ENCODE measurements at regions of chr17 and their contacts with region 1.

Region 1: DNA sequence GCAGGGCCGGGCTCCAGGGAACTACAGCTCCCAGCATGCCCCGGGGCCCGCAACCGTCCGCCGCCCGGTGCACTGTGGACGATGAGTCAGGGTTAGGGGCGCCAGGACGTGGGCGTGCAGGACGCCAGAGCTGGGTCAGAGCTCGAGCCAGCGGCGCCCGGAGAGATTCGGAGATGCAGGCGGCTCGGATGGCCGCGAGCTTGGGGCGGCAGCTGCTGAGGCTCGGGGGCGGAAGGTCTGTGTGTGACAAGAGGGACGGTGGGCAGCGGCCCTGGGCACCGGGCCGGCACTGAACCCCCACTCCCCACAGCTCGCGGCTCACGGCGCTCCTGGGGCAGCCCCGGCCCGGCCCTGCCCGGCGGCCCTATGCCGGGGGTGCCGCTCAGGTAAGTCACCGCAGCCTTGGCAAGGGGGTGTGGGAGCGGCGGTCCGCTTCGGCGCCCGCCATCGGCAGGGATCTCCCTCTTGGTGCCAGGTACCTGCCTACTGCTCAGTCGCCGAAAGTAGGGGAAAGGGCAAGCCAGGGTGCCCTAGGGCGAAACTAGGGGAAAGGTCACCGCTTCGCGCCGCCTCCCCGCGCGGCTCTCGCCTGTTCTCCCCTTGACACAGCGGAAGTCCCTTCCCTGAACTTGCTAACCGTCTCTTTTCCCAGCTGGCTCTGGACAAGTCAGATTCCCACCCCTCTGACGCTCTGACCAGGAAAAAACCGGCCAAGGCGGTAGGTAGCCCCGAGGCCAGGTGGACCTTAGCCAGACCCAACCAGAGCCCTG is at the starts of genes ACADVL and DLG4:
- DNase-seq: peak; percentile 78
- ATAC-seq: peak; percentile 76
- H3K4me3 ChIP-seq: peak within 1 kb of the TSS; percentile 31 to 86 (median 80)
- H3K4me3 Mint-ChIP-seq: peak within 1 kb of the TSS; percentile 97
- H3K27ac ChIP-seq: peak within 1 kb of the TSS; percentile 42 to 78
- H3K27ac Mint-ChIP-seq: peak within 1 kb of the TSS; percentile 93
- H3K4me1 ChIP-seq: peaks cover 20 to 47% of the 10 kb centered on the region in 2 donors
- H3K4me1 Mint-ChIP-seq: peaks cover 48% of the 10 kb centered on the region
- H3K27me3 ChIP-seq: no peaks in the 10 kb centered on the region
- H3K27me3 Mint-ChIP-seq: no peaks in the 10 kb centered on the region
- CTCF ChIP-seq: no peak
- total RNA-seq, gene ACADVL: 640 and 655 TPM in 2 replicates
- total RNA-seq, gene DLG4: 12.0 and 12.5 TPM in 2 replicates

Region 2: DNA sequence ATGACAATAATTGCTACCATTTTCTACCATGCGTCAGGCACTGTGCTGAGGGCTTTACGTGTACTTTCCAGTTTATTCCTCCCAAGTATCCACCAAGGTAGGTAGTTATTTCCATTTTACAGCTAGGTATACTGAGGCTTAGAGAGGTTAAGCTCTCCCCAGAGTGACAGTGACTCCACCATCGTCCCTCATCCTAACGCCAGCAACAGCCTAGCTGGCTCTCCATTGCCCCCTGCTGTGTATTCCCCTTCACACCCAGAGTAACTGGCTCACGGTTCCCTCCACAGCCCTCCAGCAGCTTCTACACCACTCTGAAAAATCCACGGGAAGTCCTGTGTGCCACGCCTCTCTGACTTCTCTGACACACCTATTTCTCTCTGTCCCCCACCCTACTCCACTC is 33.8 kb before region 1 on chr17:
- CTCF ChIA-PET with region 1: no interaction called
- POLR2A ChIA-PET with region 1: no interaction called
- intact Hi-C with region 1: no loop called
- DNase-seq: peak; percentile 16
- ATAC-seq: no peak
- H3K4me3 ChIP-seq: no peak overlapping the region
- H3K4me3 Mint-ChIP-seq: no peak overlapping the region
- H3K27ac ChIP-seq: no peak overlapping the region
- H3K27ac Mint-ChIP-seq: no peak overlapping the region
- H3K4me1 ChIP-seq: no peaks in the 10 kb centered on the region
- H3K4me1 Mint-ChIP-seq: peaks cover 3% of the 10 kb centered on the region
- H3K27me3 ChIP-seq: no peaks in the 10 kb centered on the region
- H3K27me3 Mint-ChIP-seq: peaks cover 8% of the 10 kb centered on the region
- CTCF ChIP-seq: no peak

Region 3: DNA sequence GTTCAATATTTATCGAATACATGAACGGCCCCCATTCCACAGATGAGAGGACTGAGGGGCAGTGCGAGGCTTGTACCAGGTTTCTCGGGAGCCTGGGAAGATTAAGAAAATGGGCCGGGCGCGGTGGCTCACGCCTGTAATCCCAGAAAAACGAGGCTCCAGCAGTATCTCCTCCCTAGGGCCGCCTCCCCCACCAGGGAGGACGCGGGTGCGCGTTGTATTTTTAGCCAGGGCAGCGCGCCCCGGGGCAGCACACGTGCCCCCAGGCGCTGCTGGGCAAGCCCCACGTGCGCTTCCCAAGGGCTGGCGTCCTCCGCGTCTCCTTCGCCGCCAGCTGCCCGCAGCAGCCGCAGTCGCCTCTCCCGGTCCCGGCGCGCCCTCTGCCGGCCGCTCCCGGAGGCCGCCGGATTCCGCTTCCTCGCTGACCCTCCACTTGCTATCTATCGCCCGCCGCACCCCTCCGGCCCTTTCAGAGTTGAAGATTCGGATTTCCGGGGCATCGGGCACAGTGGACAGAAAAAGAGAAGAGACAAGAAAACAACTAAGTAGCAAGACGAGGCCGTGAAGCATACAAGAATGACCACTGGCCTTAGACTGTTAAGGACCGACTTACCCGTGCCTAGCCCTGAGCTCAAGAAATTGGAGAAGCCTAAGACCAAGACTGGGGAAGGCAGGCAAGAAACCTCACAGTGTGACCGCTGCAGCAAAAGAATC is 76.3 kb after region 1 on chr17:
- CTCF ChIA-PET with region 1: interaction called, 47 read pairs
- POLR2A ChIA-PET with region 1: no interaction called
- intact Hi-C with region 1: loop called (anchors 2 kb)
- DNase-seq: peak; percentile 84
- ATAC-seq: peak; percentile 58
- H3K4me3 ChIP-seq: peak overlapping the region in 2 of 5 experiments; percentile 12 to 14
- H3K4me3 Mint-ChIP-seq: peak overlapping the region; percentile 83
- H3K27ac ChIP-seq: no peak overlapping the region
- H3K27ac Mint-ChIP-seq: peak overlapping the region; percentile 47
- H3K4me1 ChIP-seq: peaks cover 28 to 30% of the 10 kb centered on the region in 2 donors
- H3K4me1 Mint-ChIP-seq: peaks cover 22% of the 10 kb centered on the region
- H3K27me3 ChIP-seq: peaks cover 0 to 52% (median 14%) of the 10 kb centered on the region in 4 experiments
- H3K27me3 Mint-ChIP-seq: peaks cover 36% of the 10 kb centered on the region
- CTCF ChIP-seq: peak; percentile 93

Measured in B cell (primary cell).